ENCODE measurements at regions of chr1 and their contacts with region 1.

Region 1: GRCh38 chr1:209827384-209828262 is at the start of gene UTP25:
- DNase-seq: peak; percentile 93
- total RNA-seq, gene UTP25: 9.7 and 13.5 TPM in 2 replicates

Region 2: GRCh38 chr1:210373885-210374599 is 546.4 kb after region 1 on chr1:
- in situ Hi-C with region 1: loop called (anchors 25 kb)
- DNase-seq: peak; percentile 79

Measured in G401 (cell line).